ENCODE measurements at regions of chr15 and their contacts with region 1.

Region 1: GRCh38 chr15:64162870-64163658 is at the start of gene PPIB:
- DNase-seq: peak; percentile 94 to 100 (median 99)

Region 2: GRCh38 chr15:64355944-64356709 is 193.1 kb after region 1 on chr15 and contains the start of gene CSNK1G1:
- intact Hi-C with region 1: loop called (anchors 1 kb)
- DNase-seq: peak; percentile 92 to 99 (median 96)

Region 3: DNA sequence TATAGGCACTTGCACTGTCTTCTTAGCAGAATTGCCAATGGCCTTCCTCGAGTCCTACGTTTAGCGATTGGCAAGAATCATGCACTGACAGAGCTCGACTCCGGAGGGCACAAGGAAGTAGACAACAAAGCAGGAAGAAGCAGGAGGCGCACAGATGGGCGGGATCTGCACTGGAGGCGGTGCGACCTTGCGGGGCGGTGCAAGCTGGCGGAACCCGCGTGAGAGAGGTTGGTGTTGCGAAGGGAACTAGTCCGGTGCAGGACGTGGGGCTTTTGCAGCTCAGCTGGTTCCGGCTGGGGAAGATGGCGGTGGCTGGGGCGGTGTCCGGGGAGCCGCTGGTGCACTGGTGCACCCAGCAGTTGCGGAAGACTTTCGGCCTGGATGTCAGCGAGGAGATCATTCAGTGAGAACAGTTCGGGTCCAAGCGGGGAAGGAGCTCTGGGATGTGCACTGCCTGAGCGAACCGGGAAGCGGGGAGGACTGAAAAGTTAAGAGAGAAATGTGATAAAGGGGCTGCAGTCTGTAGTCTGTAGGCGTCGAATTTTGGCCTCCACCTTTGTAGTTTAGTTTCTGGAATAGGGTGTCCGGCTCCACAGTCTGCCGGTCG is 224.6 kb after region 1 on chr15 and contains the start of gene TRIP4:
- intact Hi-C with region 1: loop called (anchors 5 kb)
- DNase-seq: peak; percentile 89 to 99 (median 94)

Region 4: GRCh38 chr15:64611085-64611725 is 448.1 kb after region 1 on chr15:
- intact Hi-C with region 1: no loop called
- DNase-seq: no peak

Region 5: GRCh38 chr15:64681424-64682024 is 518.5 kb after region 1 on chr15:
- intact Hi-C with region 1: loop called (anchors 1 kb)
- DNase-seq: peak in 4 of 10 donors; percentile 25 to 49 (median 44)

Measured in posterior cingulate gyrus (tissue), 11 donors.